PC-3 (cell line): ENCODE measurements at regions of chr11 and their contacts with region 1.

Region 1: GRCh38 chr11:131408025-131408640 is 37.7 kb downstream of the NTM start:
- DNase-seq: peak; percentile 65
- ATAC-seq: peak; percentile 53; the same call in 1 of the 2 replicates
- H3K4me3 ChIP-seq: no peak overlapping the region
- H3K27ac ChIP-seq: no peak overlapping the region
- H3K4me1 ChIP-seq: no peaks in the 10 kb centered on the region
- H3K27me3 ChIP-seq: peaks cover 56% of the 10 kb centered on the region
- CTCF ChIP-seq: peak; percentile 80

Region 2: DNA sequence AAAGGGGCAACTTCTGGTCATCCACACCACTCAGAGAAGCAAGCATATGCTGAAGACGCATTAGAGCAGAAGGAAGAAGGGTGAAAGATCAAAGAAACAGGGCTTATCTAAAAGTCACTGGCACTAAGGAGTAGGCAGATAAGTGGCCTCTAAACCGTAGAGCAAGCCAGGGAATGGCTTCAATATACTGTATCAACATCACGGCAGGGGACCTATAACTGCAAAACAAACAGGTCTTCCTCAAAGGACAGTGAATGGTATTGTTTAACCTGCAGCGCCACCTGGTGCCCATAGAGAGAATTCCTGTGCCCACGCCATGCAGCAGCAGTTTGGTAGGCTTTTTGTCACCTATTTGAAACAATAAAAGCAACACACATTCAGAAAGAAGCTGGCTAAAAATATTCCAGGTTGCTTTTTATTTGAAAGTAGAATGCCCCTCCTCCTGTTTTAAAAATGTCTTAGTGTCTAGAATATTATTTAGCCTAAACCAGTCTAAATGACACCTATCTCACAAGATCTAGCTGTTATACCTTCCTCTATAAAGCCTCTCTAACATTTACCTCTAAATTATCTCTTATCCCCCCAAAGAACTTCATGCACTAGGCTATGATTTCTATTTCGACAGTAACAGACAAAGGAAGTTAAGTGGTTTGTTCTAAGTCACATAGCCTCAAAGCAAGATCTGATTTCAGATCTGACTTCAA is 513.7 kb before region 1 on chr11:
- CTCF ChIA-PET with region 1: no interaction called
- POLR2A ChIA-PET with region 1: no interaction called
- intact Hi-C with region 1: no loop called
- DNase-seq: peak; percentile 85
- ATAC-seq: peak; percentile 78
- H3K4me3 ChIP-seq: no peak overlapping the region
- H3K27ac ChIP-seq: no peak overlapping the region
- H3K4me1 ChIP-seq: peaks cover 30% of the 10 kb centered on the region
- H3K27me3 ChIP-seq: no peaks in the 10 kb centered on the region
- CTCF ChIP-seq: peak; percentile 97

Region 3: GRCh38 chr11:131331546-131331945 is 76.6 kb before region 1 on chr11:
- CTCF ChIA-PET with region 1: no interaction called
- POLR2A ChIA-PET with region 1: no interaction called
- intact Hi-C with region 1: no loop called
- DNase-seq: no peak
- ATAC-seq: no peak
- H3K4me3 ChIP-seq: no peak overlapping the region
- H3K27ac ChIP-seq: no peak overlapping the region
- H3K4me1 ChIP-seq: no peaks in the 10 kb centered on the region
- H3K27me3 ChIP-seq: peaks cover 73% of the 10 kb centered on the region
- CTCF ChIP-seq: no peak

Region 4: GRCh38 chr11:131511794-131512193 is 103.7 kb after region 1 on chr11:
- CTCF ChIA-PET with region 1: no interaction called
- POLR2A ChIA-PET with region 1: no interaction called
- intact Hi-C with region 1: loop called (anchors 5 kb)
- DNase-seq: peak; percentile 67
- ATAC-seq: peak; percentile 54; the same call in 1 of the 2 replicates
- H3K4me3 ChIP-seq: no peak overlapping the region
- H3K27ac ChIP-seq: no peak overlapping the region
- H3K4me1 ChIP-seq: no peaks in the 10 kb centered on the region
- H3K27me3 ChIP-seq: peaks cover 57% of the 10 kb centered on the region
- CTCF ChIP-seq: peak; percentile 77